Posterior vena cava (tissue), 2 donors: ENCODE measurements at regions of chr13 and their contacts with region 1.

Region 1: DNA sequence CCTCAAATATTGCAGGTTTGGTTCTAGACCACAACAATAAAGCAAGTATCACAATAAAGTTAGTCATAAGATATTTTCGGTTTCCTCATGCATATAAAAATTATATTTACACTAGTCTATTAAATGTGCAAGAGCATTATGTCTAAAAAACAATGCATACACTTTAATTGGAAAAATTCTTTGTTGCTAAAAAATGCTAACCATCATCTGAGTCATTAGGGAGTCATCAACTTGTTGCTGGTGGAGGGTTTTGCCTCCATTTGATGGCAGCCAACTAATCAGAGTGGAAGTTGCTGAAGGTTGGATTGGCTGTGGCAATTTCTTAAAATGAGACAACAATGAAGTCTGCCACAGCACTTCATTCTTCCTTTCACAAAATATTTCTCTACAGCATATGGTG is 422.3 kb upstream of the GPC6 start:
- DNase-seq: no peak

Region 2: GRCh38 chr13:92317066-92317465 is 487.3 kb before region 1 on chr13:
- intact Hi-C with region 1: no loop called
- DNase-seq: no peak

Region 3: GRCh38 chr13:92745258-92745657 is 59.1 kb before region 1 on chr13:
- intact Hi-C with region 1: no loop called
- DNase-seq: no peak

Region 4: DNA sequence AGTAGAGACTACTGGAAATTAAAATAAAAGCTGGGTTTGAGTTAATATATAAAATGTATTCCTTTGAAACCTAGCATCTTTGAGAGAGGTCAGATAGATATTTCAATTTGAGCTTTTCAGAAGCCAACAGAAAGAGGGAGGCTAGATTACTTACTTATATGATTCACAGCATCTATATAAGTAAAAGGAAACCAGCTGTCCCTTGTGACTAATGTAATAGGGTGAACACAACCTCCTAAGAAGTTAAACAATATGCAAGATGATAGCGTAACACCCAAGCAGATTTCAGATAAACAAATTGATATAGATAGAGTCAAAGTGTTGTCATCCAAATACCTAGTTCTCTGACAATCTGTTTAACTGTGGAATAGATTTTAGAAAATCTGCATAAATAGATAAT is 28.7 kb after region 1 on chr13:
- intact Hi-C with region 1: no loop called
- DNase-seq: no peak

Region 5: GRCh38 chr13:92896842-92897241 is 92.5 kb after region 1 on chr13:
- intact Hi-C with region 1: no loop called
- DNase-seq: no peak

Region 6: DNA sequence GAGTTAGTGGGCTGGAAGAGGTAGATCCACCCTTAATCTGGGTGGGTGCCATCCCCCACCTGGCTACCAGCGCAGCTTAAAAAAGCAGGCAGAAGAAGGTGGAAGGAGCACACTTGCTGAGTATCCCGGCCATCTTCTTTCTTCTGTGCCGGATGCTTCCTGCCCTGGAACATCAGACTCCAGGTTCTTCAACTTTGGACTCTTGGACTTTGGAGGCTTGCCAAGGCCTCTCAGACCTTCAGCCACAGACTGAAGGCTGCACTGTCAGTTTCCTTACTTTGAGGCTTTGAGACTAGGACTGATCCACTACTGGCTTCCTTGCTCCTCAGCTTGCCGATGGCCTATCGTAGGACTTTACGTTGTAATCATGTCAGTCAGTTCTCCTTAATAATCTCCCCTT is 294.6 kb after region 1 on chr13:
- intact Hi-C with region 1: loop called in 1 of 2 experiments (anchors 5 kb)
- DNase-seq: no peak